ENCODE measurements at regions of chr19 and their contacts with region 1.

Region 1: DNA sequence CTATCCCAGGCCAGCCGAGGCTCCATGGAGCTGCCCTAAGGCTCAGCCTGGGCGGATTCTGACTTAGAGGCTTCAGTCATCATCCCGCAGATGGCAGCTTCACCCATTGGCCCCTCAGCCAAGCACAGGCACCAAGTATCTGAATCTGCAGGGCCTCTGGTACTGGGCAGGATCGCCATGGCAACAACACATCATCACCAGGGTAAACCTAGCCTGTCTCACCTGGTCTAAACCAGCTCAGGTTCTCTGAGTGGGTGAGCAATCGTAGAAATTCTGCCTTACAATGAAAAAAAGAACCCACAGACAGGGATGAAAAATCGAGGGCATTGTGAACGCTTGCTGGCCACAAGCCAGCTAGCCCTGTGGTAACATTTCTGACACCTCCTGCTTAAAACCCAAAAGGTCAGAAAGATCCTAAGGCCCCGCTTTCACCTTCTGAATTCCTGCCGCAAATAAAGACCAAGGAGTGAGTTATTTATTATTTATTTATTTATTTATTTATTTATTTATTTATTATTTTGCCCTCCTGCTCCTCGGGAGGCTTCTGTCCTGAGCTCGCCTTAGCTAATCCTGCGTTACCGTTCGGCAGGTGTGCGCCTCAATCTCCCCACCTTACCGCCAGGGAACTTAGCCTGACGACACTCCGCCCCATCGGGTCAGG is 12.0 kb upstream of the CEACAM21 start:
- DNase-seq: no peak
- H3K4me3 ChIP-seq: peak overlapping the region in 1 of 4 experiments; percentile 50; a peak in 3 of 8 replicates
- H3K27ac ChIP-seq: no peak overlapping the region
- H3K4me1 ChIP-seq: peaks cover 0 to 9% (median 3%) of the 10 kb centered on the region in 4 experiments; a peak in 3 of 7 replicates
- H3K27me3 ChIP-seq: peaks cover 8 to 34% (median 25%) of the 10 kb centered on the region in 4 experiments
- CTCF ChIP-seq: no peak
- EP300 ChIP-seq: no peak
- POLR2A ChIP-seq: no peak
- RAD21 ChIP-seq: no peak

Region 2: DNA sequence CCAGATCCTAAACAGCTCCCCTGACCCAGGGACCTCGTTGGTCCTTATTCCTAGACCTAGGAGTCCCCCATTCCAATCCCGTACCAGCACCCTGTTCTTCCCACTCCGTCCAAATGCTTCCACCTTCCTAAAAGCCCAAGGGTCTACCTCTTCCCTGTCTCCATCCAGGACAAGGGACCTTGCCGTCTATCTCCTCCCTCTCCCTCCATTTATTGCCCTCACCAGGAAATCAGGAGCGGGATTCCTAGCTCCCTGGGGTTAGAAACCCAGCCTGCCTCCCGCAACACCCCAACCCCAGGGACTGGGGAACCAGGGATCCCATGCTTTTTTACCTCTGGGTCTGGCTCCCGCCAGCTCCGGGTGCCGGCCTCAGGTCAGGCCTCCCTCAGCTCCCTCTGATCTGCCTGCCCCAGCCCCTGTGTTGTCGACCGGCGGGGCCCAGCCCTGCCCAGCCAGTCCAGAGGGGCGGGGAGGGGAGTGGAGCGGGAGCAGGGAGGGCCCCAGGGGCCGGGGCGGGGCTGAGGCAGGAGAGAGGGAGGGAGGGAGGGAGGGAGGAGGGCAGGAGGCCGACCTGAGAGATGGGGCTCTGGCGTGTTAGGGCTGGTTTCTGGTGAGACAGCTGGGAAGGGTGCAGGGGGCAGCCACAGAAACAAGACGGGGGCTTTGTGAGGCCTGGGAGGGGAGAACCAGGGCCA is 136.9 kb before region 1 on chr19 and contains the start of gene B3GNT8:
- CTCF ChIA-PET with region 1: interaction called, 10 read pairs
- POLR2A ChIA-PET with region 1: interaction called, 3 read pairs
- DNase-seq: peak; percentile 56 to 88
- H3K4me3 ChIP-seq: peak within 1 kb of the TSS; percentile 40 to 77 (median 54); a peak in 7 of 8 replicates
- H3K27ac ChIP-seq: peak within 1 kb of the TSS; percentile 47; the same call in 1 of the 2 replicates
- H3K4me1 ChIP-seq: peaks cover 0 to 18% (median 4%) of the 10 kb centered on the region in 4 experiments; a peak in 5 of 7 replicates
- H3K27me3 ChIP-seq: no peaks in the 10 kb centered on the region
- CTCF ChIP-seq: no peak
- EP300 ChIP-seq: no peak
- POLR2A ChIP-seq: no peak; a peak in 1 of 3 replicates
- RAD21 ChIP-seq: no peak
- total RNA-seq, gene B3GNT8: 0.86 and 1.6 TPM in 2 replicates

Region 3: GRCh38 chr19:41457241-41457640 is 106.7 kb before region 1 on chr19:
- CTCF ChIA-PET with region 1: interaction called, 364 read pairs
- POLR2A ChIA-PET with region 1: no interaction called
- DNase-seq: no peak
- H3K4me3 ChIP-seq: no peak overlapping the region
- H3K27ac ChIP-seq: no peak overlapping the region
- H3K4me1 ChIP-seq: no peaks in the 10 kb centered on the region
- H3K27me3 ChIP-seq: no peaks in the 10 kb centered on the region
- CTCF ChIP-seq: no peak
- EP300 ChIP-seq: no peak
- POLR2A ChIP-seq: no peak
- RAD21 ChIP-seq: no peak

Region 4: DNA sequence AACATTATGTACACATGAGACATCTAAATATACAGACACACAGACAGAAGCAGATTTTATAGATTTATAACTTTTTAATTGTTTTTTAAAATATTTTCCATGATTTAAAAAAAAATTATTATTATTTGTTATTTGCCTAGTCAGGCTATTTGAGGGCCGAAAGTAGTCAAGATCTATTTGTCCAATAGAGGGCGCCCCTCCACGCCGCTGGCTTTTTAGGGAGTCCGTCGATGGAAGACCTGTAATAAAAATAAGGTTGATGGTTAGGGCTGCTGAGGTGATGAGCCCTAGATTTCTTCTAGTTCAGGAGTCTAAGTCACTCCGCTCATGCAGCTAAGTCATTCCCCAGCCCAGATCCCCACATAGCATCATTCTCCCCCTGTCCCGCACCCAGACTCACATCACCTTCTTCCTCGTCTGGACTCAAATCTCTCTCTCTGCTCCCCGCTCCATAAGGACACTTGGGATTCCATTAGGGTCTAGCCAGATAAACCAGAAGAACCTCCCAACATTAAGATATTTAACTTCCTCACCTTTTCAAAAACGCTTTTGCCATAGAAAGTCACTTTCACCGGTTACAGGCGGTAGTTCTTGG is 21.9 kb before region 1 on chr19:
- CTCF ChIA-PET with region 1: interaction called, 34 read pairs
- POLR2A ChIA-PET with region 1: no interaction called
- DNase-seq: peak in 1 of 2 experiments; percentile 87
- H3K4me3 ChIP-seq: no peak overlapping the region
- H3K27ac ChIP-seq: no peak overlapping the region
- H3K4me1 ChIP-seq: no peaks in the 10 kb centered on the region
- H3K27me3 ChIP-seq: no peaks in the 10 kb centered on the region; a peak in 1 of 7 replicates
- CTCF ChIP-seq: peak; percentile 35 to 60 (median 54)
- EP300 ChIP-seq: no peak
- POLR2A ChIP-seq: no peak
- RAD21 ChIP-seq: peak; percentile 27 to 53; a peak in 3 of 4 replicates

Region 5: DNA sequence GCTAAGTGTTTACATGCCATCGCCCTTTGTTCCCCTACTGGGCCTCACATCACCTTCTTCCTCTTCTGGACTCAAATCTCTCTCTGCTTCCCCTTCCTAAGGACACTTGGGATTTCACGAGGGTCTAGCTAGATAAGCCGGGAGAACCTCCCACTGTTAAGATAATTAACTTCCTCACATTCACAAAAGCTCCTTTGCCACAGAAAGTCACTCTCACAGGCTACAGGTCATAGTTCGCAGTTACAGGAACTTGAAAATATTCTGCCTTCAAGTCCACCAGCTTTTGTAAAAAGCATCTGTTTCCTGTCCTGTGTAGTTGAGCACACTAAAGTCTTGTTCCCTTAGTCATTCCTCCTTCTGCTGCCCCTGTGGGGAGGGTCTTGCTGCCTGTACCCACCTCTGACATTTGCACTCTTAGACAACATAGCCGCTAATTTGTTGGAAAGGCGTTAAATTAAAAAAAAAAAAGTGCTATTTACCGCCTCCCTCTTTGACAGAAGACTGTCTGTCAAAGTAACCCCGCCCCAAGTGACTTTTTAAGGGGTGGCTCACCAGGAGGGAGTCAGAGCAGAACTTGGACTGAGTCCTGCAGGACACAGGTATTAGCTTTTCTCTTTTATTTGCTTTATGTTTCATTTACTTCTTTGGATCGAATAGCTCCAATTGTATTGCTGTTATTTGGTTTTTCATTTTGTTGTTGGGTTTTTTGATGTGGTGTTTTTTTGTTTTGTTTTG is 14.9 kb before region 1 on chr19:
- CTCF ChIA-PET with region 1: interaction called, 34 read pairs
- POLR2A ChIA-PET with region 1: no interaction called
- DNase-seq: no peak
- H3K4me3 ChIP-seq: peak overlapping the region in 2 of 4 experiments; percentile 5 to 36; a peak in 4 of 8 replicates
- H3K27ac ChIP-seq: no peak overlapping the region
- H3K4me1 ChIP-seq: peaks cover 0 to 5% (median 0%) of the 10 kb centered on the region in 4 experiments; a peak in 1 of 7 replicates
- H3K27me3 ChIP-seq: no peaks in the 10 kb centered on the region
- CTCF ChIP-seq: no peak
- EP300 ChIP-seq: no peak
- POLR2A ChIP-seq: no peak
- RAD21 ChIP-seq: no peak